Left cardiac atrium (tissue), 4 donors: ENCODE measurements at regions of chr2 and their contacts with region 1.

Region 1: GRCh38 chr2:159137511-159138241 is 148.8 kb downstream of the WDSUB1 start:
- DNase-seq: no peak
- ATAC-seq: peak; percentile 40 to 46

Region 2: DNA sequence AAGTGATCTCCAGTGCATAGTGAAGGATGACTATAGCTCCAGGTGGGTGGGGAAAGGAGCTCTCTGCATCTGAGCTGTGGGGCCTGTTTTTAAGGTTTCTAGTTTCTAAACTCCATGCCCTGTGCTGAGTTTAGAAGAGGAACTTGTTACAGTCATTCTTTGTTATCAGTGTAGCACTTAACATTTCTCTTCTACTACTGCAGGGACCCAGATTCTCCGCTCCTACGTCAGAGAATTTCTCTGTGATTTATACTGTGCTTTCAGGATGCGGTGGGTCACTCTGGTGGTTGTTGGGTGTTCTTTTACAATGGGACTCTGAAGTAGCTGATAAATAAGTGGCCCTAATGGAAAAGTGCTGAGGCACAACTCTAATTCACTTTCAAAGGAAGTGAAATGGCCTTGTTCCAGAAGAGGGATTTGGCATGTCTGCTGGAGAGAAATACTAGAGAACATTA is 26.8 kb after region 1 on chr2:
- intact Hi-C with region 1: loop called in 1 of 2 experiments (anchors 2 kb)
- DNase-seq: no peak
- ATAC-seq: peak; percentile 81 to 83

Region 3: GRCh38 chr2:159982270-159982669 is 844.6 kb after region 1 on chr2:
- intact Hi-C with region 1: no loop called
- DNase-seq: peak; percentile 28
- ATAC-seq: peak in 1 of 2 donors; percentile 95